PC-9 (cell line): ENCODE measurements at regions of chr7 and their contacts with region 1.

Region 1: GRCh38 chr7:98990356-98990755 is 112.0 kb downstream of the TRRAP start:
- DNase-seq: no peak
- H3K4me3 ChIP-seq: no peak overlapping the region
- H3K27ac ChIP-seq: no peak overlapping the region
- H3K4me1 ChIP-seq: no peaks in the 10 kb centered on the region
- H3K27me3 ChIP-seq: no peaks in the 10 kb centered on the region
- CTCF ChIP-seq: no peak

Region 2: GRCh38 chr7:98862716-98863420 is 127.5 kb before region 1 on chr7:
- CTCF ChIA-PET with region 1: interaction called, 11 read pairs
- POLR2A ChIA-PET with region 1: no interaction called
- intact Hi-C with region 1: no loop called
- DNase-seq: no peak
- H3K4me3 ChIP-seq: no peak overlapping the region
- H3K27ac ChIP-seq: no peak overlapping the region
- H3K4me1 ChIP-seq: peaks cover 19% of the 10 kb centered on the region
- H3K27me3 ChIP-seq: no peaks in the 10 kb centered on the region
- CTCF ChIP-seq: no peak

Region 3: GRCh38 chr7:98956937-98957336 is 33.4 kb before region 1 on chr7:
- CTCF ChIA-PET with region 1: no interaction called
- POLR2A ChIA-PET with region 1: interaction called, 21 read pairs
- intact Hi-C with region 1: no loop called
- DNase-seq: no peak
- H3K4me3 ChIP-seq: no peak overlapping the region
- H3K27ac ChIP-seq: no peak overlapping the region
- H3K4me1 ChIP-seq: no peaks in the 10 kb centered on the region
- H3K27me3 ChIP-seq: no peaks in the 10 kb centered on the region
- CTCF ChIP-seq: no peak

Region 4: DNA sequence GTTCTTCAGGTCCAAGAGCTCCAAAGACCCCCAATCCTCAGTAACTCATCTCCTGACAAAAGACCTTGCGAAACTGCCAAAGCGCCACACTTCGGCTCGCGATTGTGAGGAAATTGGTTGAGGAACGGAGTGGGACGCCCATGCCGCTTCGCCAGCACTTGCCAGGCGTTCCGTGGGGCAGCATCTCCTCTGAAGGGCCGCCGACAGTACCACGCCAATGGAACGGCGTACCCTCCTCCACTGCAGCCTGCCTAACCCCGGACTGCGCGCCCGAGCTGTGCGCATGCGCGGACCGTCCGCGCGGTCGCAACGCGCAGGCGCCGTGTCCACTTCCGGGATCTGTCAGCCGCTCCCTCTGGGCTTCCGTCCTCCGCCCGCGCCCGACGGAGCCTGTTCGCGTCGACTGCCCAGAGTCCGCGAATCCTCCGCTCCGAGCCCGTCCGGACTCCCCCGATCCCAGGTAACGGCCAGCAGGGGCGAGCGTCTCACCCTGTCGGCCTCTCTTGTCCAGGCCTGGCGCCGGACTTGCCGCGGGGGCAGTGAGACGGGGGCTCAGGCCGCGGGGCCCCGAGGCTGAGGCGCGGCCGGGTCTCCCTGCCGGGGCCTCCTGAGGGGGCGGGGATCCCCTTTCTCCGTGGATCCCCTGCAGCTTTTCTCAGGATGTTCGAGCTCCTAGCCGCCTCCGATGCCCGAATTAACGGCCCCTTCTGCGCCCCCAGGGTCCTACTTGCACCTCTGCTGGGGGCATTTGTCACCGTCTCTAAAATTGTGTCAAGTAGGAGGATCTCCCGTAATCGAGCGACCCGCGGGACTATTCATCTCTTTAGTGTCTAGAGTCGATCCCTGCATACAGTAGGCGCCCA is 335.4 kb after region 1 on chr7 and contains the start of gene ARPC1A:
- CTCF ChIA-PET with region 1: no interaction called
- POLR2A ChIA-PET with region 1: no interaction called
- intact Hi-C with region 1: no loop called
- DNase-seq: peak; percentile 82 to 96
- H3K4me3 ChIP-seq: peak within 1 kb of the TSS; percentile 93
- H3K27ac ChIP-seq: peak within 1 kb of the TSS; percentile 97
- H3K4me1 ChIP-seq: peaks cover 44% of the 10 kb centered on the region
- H3K27me3 ChIP-seq: no peaks in the 10 kb centered on the region
- CTCF ChIP-seq: no peak
- total RNA-seq, gene ARPC1A: 274 and 305 TPM in 2 replicates